Activated B cell treated with CpG ODN at 0.5 μM for 24 hours (primary cell): ENCODE measurements at regions of chr1 and their contacts with region 1.

Region 1: GRCh38 chr1:227542143-227543120 is 20.9 kb upstream of the ZNF678 start:
- DNase-seq: peak; percentile 90
- ATAC-seq: peak; percentile 97
- H3K4me3 Mint-ChIP-seq: peak overlapping the region; percentile 68
- H3K27ac Mint-ChIP-seq: no peak overlapping the region
- H3K4me1 Mint-ChIP-seq: peaks cover 5% of the 10 kb centered on the region
- H3K27me3 Mint-ChIP-seq: no peaks in the 10 kb centered on the region
- CTCF ChIP-seq: peak; percentile 65

Region 2: GRCh38 chr1:226912587-226913176 is 629.8 kb before region 1 on chr1:
- CTCF ChIA-PET with region 1: interaction called, 3 read pairs
- POLR2A ChIA-PET with region 1: no interaction called
- intact Hi-C with region 1: loop called (anchors 5 kb)
- DNase-seq: no peak
- ATAC-seq: peak; percentile 42
- H3K4me3 Mint-ChIP-seq: no peak overlapping the region
- H3K27ac Mint-ChIP-seq: no peak overlapping the region
- H3K4me1 Mint-ChIP-seq: no peaks in the 10 kb centered on the region
- H3K27me3 Mint-ChIP-seq: no peaks in the 10 kb centered on the region
- CTCF ChIP-seq: no peak

Region 3: GRCh38 chr1:227465256-227465655 is 77.2 kb before region 1 on chr1:
- CTCF ChIA-PET with region 1: no interaction called
- POLR2A ChIA-PET with region 1: no interaction called
- intact Hi-C with region 1: no loop called
- DNase-seq: no peak
- ATAC-seq: no peak
- H3K4me3 Mint-ChIP-seq: no peak overlapping the region
- H3K27ac Mint-ChIP-seq: no peak overlapping the region
- H3K4me1 Mint-ChIP-seq: no peaks in the 10 kb centered on the region
- H3K27me3 Mint-ChIP-seq: peaks cover under 1% of the 10 kb centered on the region
- CTCF ChIP-seq: no peak

Region 4: GRCh38 chr1:227563324-227564201 is 21.1 kb after region 1 on chr1 and contains the start of gene ZNF678:
- CTCF ChIA-PET with region 1: interaction called, 16 read pairs
- POLR2A ChIA-PET with region 1: interaction called, 5 read pairs
- intact Hi-C with region 1: loop called (anchors 1 kb)
- DNase-seq: peak; percentile 77
- ATAC-seq: peak; percentile 89
- H3K4me3 Mint-ChIP-seq: peak within 1 kb of the TSS; percentile 95
- H3K27ac Mint-ChIP-seq: peak within 1 kb of the TSS; percentile 94
- H3K4me1 Mint-ChIP-seq: peaks cover 48% of the 10 kb centered on the region
- H3K27me3 Mint-ChIP-seq: peaks cover 8% of the 10 kb centered on the region
- CTCF ChIP-seq: no peak
- total RNA-seq, gene ZNF678: 15.4 and 20.3 TPM in 2 replicates

Region 5: DNA sequence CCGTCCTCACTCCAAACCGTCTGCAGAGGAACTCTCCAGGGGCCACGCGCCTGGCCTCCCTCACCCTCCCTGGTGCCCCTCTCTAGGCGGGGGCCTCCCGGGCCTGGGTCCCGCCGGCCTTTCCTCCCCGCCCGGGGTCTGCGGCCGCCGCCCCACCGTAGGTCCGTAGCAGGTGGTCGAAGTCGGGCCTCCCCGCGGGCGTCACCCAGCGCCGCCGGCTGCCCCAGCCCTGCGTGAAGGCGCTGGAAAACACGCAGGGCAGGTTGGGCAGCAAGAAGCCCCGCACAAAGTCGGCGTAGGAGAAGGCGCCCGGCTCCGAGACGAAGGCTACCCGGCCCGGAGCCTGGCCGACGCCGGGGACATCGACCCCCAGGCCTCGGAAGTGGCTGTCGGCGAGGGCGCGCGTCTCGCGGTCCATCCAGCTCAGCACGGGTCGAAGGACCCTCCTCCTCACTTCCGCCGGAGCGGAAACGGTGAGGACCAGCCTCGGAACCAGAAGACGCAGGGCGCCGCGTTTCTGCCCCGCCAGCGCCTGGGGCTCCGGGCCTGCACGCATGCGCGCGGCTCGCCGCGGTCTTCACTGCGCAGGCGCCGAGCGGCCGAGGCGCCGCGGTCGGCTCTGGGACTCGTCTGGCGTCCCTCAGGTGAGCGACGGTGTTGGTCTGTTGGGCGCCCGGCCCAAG is 192.6 kb after region 1 on chr1 and contains the starts of genes JMJD4 and SNAP47:
- CTCF ChIA-PET with region 1: no interaction called
- POLR2A ChIA-PET with region 1: no interaction called
- intact Hi-C with region 1: loop called (anchors 2 kb)
- DNase-seq: peak; percentile 97
- ATAC-seq: peak; percentile 91
- H3K4me3 Mint-ChIP-seq: peak within 1 kb of the TSS; percentile 87
- H3K27ac Mint-ChIP-seq: peak within 1 kb of the TSS; percentile 78
- H3K4me1 Mint-ChIP-seq: peaks cover 42% of the 10 kb centered on the region
- H3K27me3 Mint-ChIP-seq: no peaks in the 10 kb centered on the region
- CTCF ChIP-seq: no peak
- total RNA-seq, gene JMJD4: 23.5 and 26.7 TPM in 2 replicates
- total RNA-seq, gene SNAP47: 24.2 and 24.3 TPM in 2 replicates

Region 6: GRCh38 chr1:227745568-227746261 is 203.3 kb after region 1 on chr1:
- CTCF ChIA-PET with region 1: no interaction called
- POLR2A ChIA-PET with region 1: no interaction called
- intact Hi-C with region 1: no loop called
- DNase-seq: no peak
- ATAC-seq: no peak
- H3K4me3 Mint-ChIP-seq: no peak overlapping the region
- H3K27ac Mint-ChIP-seq: no peak overlapping the region
- H3K4me1 Mint-ChIP-seq: peaks cover 17% of the 10 kb centered on the region
- H3K27me3 Mint-ChIP-seq: no peaks in the 10 kb centered on the region
- CTCF ChIP-seq: no peak

Region 7: GRCh38 chr1:227946624-227947385 is 404.4 kb after region 1 on chr1:
- CTCF ChIA-PET with region 1: no interaction called
- POLR2A ChIA-PET with region 1: no interaction called
- intact Hi-C with region 1: no loop called
- DNase-seq: peak; percentile 32
- ATAC-seq: peak; percentile 62
- H3K4me3 Mint-ChIP-seq: peak overlapping the region; percentile 59
- H3K27ac Mint-ChIP-seq: no peak overlapping the region
- H3K4me1 Mint-ChIP-seq: peaks cover 9% of the 10 kb centered on the region
- H3K27me3 Mint-ChIP-seq: peaks cover 25% of the 10 kb centered on the region
- CTCF ChIP-seq: no peak

Region 8: GRCh38 chr1:228420963-228421826 is 878.8 kb after region 1 on chr1:
- CTCF ChIA-PET with region 1: no interaction called
- POLR2A ChIA-PET with region 1: no interaction called
- intact Hi-C with region 1: no loop called
- DNase-seq: no peak
- ATAC-seq: no peak
- H3K4me3 Mint-ChIP-seq: no peak overlapping the region
- H3K27ac Mint-ChIP-seq: no peak overlapping the region
- H3K4me1 Mint-ChIP-seq: peaks cover 10% of the 10 kb centered on the region
- H3K27me3 Mint-ChIP-seq: peaks cover 42% of the 10 kb centered on the region
- CTCF ChIP-seq: no peak